ENCODE measurements at regions of chr17 and their contacts with region 1.

Region 1: GRCh38 chr17:29180034-29180787 is at the start of gene MYO18A:
- DNase-seq: peak; percentile 86
- H3K4me3 Mint-ChIP-seq: peak within 1 kb of the TSS; percentile 56
- H3K27ac Mint-ChIP-seq: no peak within 1 kb of the TSS
- H3K4me1 Mint-ChIP-seq: peaks cover 36% of the 10 kb centered on the region
- H3K27me3 Mint-ChIP-seq: peaks cover 2% of the 10 kb centered on the region
- total RNA-seq, gene MYO18A: 46.3 to 47.1 TPM

Region 2: GRCh38 chr17:29059281-29059680 is 120.9 kb before region 1 on chr17:
- CTCF ChIA-PET with region 1: no interaction called
- POLR2A ChIA-PET with region 1: no interaction called
- intact Hi-C with region 1: no loop called
- DNase-seq: no peak
- H3K4me3 Mint-ChIP-seq: no peak overlapping the region
- H3K27ac Mint-ChIP-seq: no peak overlapping the region
- H3K4me1 Mint-ChIP-seq: peaks cover 2% of the 10 kb centered on the region
- H3K27me3 Mint-ChIP-seq: no peaks in the 10 kb centered on the region

Region 3: GRCh38 chr17:29140051-29140621 is 40.1 kb before region 1 on chr17:
- CTCF ChIA-PET with region 1: interaction called, 308 read pairs
- POLR2A ChIA-PET with region 1: interaction called, 12 read pairs
- intact Hi-C with region 1: no loop called
- DNase-seq: peak; percentile 93
- H3K4me3 Mint-ChIP-seq: peak overlapping the region; percentile 93
- H3K27ac Mint-ChIP-seq: peak overlapping the region; percentile 97
- H3K4me1 Mint-ChIP-seq: peaks cover 69% of the 10 kb centered on the region
- H3K27me3 Mint-ChIP-seq: no peaks in the 10 kb centered on the region

Region 4: GRCh38 chr17:29155227-29155965 is 24.8 kb before region 1 on chr17:
- CTCF ChIA-PET with region 1: interaction called, 308 read pairs
- POLR2A ChIA-PET with region 1: interaction called, 7 read pairs
- intact Hi-C with region 1: no loop called
- DNase-seq: peak; percentile 84
- H3K4me3 Mint-ChIP-seq: peak overlapping the region; percentile 52
- H3K27ac Mint-ChIP-seq: peak overlapping the region; percentile 79
- H3K4me1 Mint-ChIP-seq: peaks cover 32% of the 10 kb centered on the region
- H3K27me3 Mint-ChIP-seq: no peaks in the 10 kb centered on the region

Region 5: GRCh38 chr17:29162738-29163341 is 17.4 kb before region 1 on chr17:
- CTCF ChIA-PET with region 1: interaction called, 43 read pairs
- POLR2A ChIA-PET with region 1: interaction called, 5 read pairs
- intact Hi-C with region 1: no loop called
- DNase-seq: no peak
- H3K4me3 Mint-ChIP-seq: no peak overlapping the region
- H3K27ac Mint-ChIP-seq: no peak overlapping the region
- H3K4me1 Mint-ChIP-seq: peaks cover 7% of the 10 kb centered on the region
- H3K27me3 Mint-ChIP-seq: no peaks in the 10 kb centered on the region